B cell (primary cell): ENCODE measurements at regions of chr2 and their contacts with region 1.

Region 1: GRCh38 chr2:158024288-158024898 is 77.3 kb upstream of the UPP2 start:
- DNase-seq: peak; percentile 51
- ATAC-seq: peak; percentile 60
- H3K4me3 ChIP-seq: no peak overlapping the region
- H3K4me3 Mint-ChIP-seq: no peak overlapping the region
- H3K27ac ChIP-seq: no peak overlapping the region
- H3K27ac Mint-ChIP-seq: no peak overlapping the region
- H3K4me1 ChIP-seq: no peaks in the 10 kb centered on the region
- H3K4me1 Mint-ChIP-seq: no peaks in the 10 kb centered on the region
- H3K27me3 ChIP-seq: no peaks in the 10 kb centered on the region
- H3K27me3 Mint-ChIP-seq: no peaks in the 10 kb centered on the region
- CTCF ChIP-seq: peak; percentile 90

Region 2: GRCh38 chr2:158013891-158014290 is 10.5 kb before region 1 on chr2:
- CTCF ChIA-PET with region 1: interaction called, 20 read pairs
- POLR2A ChIA-PET with region 1: no interaction called
- intact Hi-C with region 1: no loop called
- DNase-seq: no peak
- ATAC-seq: no peak
- H3K4me3 ChIP-seq: no peak overlapping the region
- H3K4me3 Mint-ChIP-seq: no peak overlapping the region
- H3K27ac ChIP-seq: no peak overlapping the region
- H3K27ac Mint-ChIP-seq: no peak overlapping the region
- H3K4me1 ChIP-seq: no peaks in the 10 kb centered on the region
- H3K4me1 Mint-ChIP-seq: no peaks in the 10 kb centered on the region
- H3K27me3 ChIP-seq: peaks cover 0 to 5% (median 2%) of the 10 kb centered on the region in 4 experiments
- H3K27me3 Mint-ChIP-seq: peaks cover 15% of the 10 kb centered on the region
- CTCF ChIP-seq: no peak

Region 3: DNA sequence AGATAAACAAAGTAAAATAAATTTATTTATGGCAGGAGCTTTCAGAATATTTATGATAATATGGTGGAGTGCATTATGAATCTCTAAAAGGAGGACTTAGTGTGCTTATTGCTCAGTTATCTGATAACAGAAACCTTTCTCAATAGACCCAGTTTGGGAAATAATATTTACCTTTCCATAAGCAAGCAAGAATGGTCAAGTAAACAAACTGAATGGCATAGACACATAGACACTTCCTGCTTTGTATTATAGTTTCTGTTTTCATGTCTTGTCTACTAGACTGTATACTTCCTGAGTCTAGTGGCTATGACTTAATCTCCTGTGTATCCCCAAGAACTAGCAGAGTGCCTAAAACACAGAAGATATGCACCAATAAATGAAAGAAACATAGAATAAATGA is 165.1 kb after region 1 on chr2:
- CTCF ChIA-PET with region 1: no interaction called
- POLR2A ChIA-PET with region 1: no interaction called
- intact Hi-C with region 1: no loop called
- DNase-seq: peak; percentile 39
- ATAC-seq: peak; percentile 41
- H3K4me3 ChIP-seq: no peak overlapping the region
- H3K4me3 Mint-ChIP-seq: peak overlapping the region; percentile 57
- H3K27ac ChIP-seq: no peak overlapping the region
- H3K27ac Mint-ChIP-seq: peak overlapping the region; percentile 83
- H3K4me1 ChIP-seq: peaks cover 23 to 34% of the 10 kb centered on the region in 2 donors
- H3K4me1 Mint-ChIP-seq: peaks cover 31% of the 10 kb centered on the region
- H3K27me3 ChIP-seq: no peaks in the 10 kb centered on the region
- H3K27me3 Mint-ChIP-seq: peaks cover 5% of the 10 kb centered on the region
- CTCF ChIP-seq: no peak

Region 4: DNA sequence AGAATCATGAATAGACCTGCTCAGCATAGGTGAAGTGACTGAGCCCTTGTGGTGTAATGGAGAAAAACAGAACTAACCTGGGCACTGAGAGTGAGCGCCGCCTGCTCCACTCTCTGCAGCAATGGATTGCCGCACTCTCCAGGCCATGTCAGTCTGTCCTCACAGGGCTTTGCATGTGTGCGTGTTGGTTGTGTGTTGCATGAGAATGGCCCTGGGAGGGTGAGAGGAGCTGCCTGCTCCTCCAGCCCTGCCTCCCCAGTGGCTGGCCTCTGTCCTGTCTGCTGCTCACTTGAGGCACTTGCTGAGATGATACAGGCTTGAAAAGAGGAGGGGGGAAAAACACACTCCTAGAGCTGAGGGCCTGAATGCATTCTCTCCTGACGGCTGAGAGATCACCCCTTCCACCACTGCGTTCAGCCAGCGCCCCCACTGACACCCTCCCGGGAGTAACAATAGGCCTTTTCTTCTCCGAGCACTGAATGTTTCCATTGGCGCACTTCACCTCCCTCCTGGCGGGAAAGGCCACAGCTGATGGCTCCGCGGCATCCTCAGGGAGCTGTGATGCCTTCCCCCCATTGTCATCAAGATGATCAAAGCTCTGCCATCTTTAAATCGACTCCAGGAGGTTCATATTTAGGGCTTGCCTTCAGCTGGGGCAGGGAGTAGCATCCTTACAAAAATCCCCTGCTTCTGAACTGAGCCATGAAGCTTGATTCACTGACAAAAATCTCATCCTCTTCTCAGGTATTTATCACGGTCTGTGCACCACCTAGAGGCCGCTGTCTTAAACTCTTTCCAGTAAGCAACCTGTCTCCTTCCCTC is 720.9 kb after region 1 on chr2:
- CTCF ChIA-PET with region 1: interaction called, 106 read pairs
- POLR2A ChIA-PET with region 1: interaction called, 3 read pairs
- intact Hi-C with region 1: loop called (anchors 1 kb)
- DNase-seq: peak; percentile 44
- ATAC-seq: no peak
- H3K4me3 ChIP-seq: no peak overlapping the region
- H3K4me3 Mint-ChIP-seq: no peak overlapping the region
- H3K27ac ChIP-seq: no peak overlapping the region
- H3K27ac Mint-ChIP-seq: no peak overlapping the region
- H3K4me1 ChIP-seq: no peaks in the 10 kb centered on the region
- H3K4me1 Mint-ChIP-seq: no peaks in the 10 kb centered on the region
- H3K27me3 ChIP-seq: peaks cover 0 to 10% (median 0%) of the 10 kb centered on the region in 4 experiments
- H3K27me3 Mint-ChIP-seq: peaks cover 3% of the 10 kb centered on the region
- CTCF ChIP-seq: peak; percentile 18